K562 (cell line): ENCODE measurements at regions of chr14 and their contacts with region 1.

Region 1: DNA sequence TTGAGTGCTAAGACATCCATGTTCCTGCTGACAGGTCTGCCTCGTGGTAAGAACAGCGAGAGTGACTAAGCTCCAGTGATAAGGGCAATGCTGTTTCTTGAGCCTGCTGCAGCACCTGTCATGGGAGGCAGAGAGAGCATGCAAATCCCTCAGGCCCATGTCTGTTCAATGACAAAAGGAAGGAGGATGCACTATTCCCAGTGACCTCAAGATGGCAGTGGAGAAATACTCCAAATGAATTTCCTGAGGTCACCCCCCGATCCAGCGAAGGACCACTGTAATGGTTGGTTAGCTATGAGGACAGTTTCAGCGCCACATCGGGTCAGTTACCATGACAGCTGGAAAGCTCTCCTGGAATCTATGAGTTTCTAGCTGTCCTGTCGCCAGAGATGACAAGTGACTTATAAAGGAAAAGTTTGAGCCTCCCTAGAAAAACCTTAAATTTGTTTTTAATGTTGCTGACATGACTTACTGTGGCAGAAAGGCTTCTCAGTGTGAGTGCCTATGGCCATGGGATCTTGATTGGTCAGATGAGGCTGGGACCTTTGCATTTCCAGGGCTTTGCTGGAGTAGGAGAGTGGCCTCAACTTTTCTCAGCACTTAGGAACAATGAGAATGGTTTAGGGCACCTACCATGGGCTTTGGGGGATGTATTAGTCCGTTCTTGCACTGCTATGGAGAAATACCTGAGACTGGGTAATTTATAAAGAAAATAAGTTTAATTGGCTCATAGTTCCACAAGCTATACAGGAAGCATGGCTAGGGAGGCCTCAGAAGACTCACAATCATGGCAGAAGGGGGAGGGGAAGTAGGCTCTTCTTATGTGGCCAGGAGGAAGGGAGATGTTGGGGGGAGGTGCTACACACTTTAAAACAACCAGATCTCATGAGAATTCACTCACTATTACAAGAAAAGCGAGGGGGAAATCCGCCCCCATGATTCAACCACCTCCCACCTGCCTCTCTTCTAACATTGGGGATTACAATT is 88.0 kb upstream of the TMEM260 start:
- DNase-seq: peak; percentile 12 to 41 (median 27)
- ATAC-seq: peak; percentile 73
- H3K4me3 ChIP-seq: no peak overlapping the region
- H3K27ac ChIP-seq: no peak overlapping the region
- H3K4me1 ChIP-seq: no peaks in the 10 kb centered on the region
- H3K27me3 ChIP-seq: no peaks in the 10 kb centered on the region; a peak in 1 of 5 replicates
- CTCF ChIP-seq: peak; percentile 47 to 60 (median 59); a peak in 5 of 6 replicates
- EP300 ChIP-seq: no peak
- POLR2A ChIP-seq: no peak
- RAD21 ChIP-seq: peak; percentile 37 to 63

Region 2: DNA sequence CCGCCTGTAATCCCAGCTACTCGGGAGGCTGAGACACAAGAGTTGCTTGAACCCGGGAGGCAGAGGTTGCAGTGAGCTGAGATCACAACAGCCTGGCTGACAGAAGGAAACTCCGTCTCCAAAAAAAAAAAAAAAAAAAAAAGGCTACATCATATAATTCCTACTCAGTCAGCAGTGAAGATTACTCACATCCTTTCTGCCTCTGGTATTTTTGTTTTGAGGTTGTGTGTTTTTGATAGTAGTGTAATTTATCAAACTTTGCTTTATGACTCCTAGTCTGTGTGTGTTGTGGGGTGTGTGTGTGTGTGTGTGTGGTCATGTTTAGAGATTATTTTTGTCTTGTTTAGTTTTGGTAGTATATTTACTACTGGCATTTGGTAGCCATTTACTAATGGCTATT is 1270.4 kb before region 1 on chr14:
- CTCF ChIA-PET with region 1: no interaction called
- POLR2A ChIA-PET with region 1: no interaction called
- in situ Hi-C with region 1: loop called (anchors 25 kb)
- intact Hi-C with region 1: no loop called
- DNase-seq: no peak
- ATAC-seq: no peak
- H3K4me3 ChIP-seq: no peak overlapping the region
- H3K27ac ChIP-seq: no peak overlapping the region
- H3K4me1 ChIP-seq: no peaks in the 10 kb centered on the region; a peak in 1 of 5 replicates
- H3K27me3 ChIP-seq: no peaks in the 10 kb centered on the region
- CTCF ChIP-seq: no peak
- EP300 ChIP-seq: no peak
- POLR2A ChIP-seq: no peak
- RAD21 ChIP-seq: no peak

Region 3: GRCh38 chr14:57182760-57183503 is 691.3 kb after region 1 on chr14:
- CTCF ChIA-PET with region 1: interaction called, 5 read pairs
- POLR2A ChIA-PET with region 1: no interaction called
- in situ Hi-C with region 1: loop called (anchors 25 kb)
- intact Hi-C with region 1: loop called (anchors 5 kb)
- DNase-seq: peak in 3 of 4 experiments; percentile 4 to 28 (median 9)
- ATAC-seq: peak; percentile 76
- H3K4me3 ChIP-seq: no peak overlapping the region
- H3K27ac ChIP-seq: no peak overlapping the region
- H3K4me1 ChIP-seq: no peaks in the 10 kb centered on the region
- H3K27me3 ChIP-seq: peaks cover 0 to 9% of the 10 kb centered on the region in 2 experiments; a peak in 3 of 5 replicates
- CTCF ChIP-seq: peak; percentile 46 to 59 (median 57); a peak in 5 of 6 replicates
- EP300 ChIP-seq: no peak
- POLR2A ChIP-seq: no peak
- RAD21 ChIP-seq: peak; percentile 64 to 69

Region 4: GRCh38 chr14:57293866-57294837 is 802.6 kb after region 1 on chr14:
- CTCF ChIA-PET with region 1: interaction called, 7 read pairs
- POLR2A ChIA-PET with region 1: no interaction called
- in situ Hi-C with region 1: no loop called
- intact Hi-C with region 1: loop called (anchors 10 kb)
- DNase-seq: no peak
- ATAC-seq: no peak
- H3K4me3 ChIP-seq: no peak overlapping the region
- H3K27ac ChIP-seq: no peak overlapping the region
- H3K4me1 ChIP-seq: no peaks in the 10 kb centered on the region
- H3K27me3 ChIP-seq: no peaks in the 10 kb centered on the region
- CTCF ChIP-seq: peak in 2 of 3 experiments; percentile 12 to 41; a peak in 1 of 6 replicates
- EP300 ChIP-seq: no peak
- POLR2A ChIP-seq: no peak
- RAD21 ChIP-seq: peak in 1 of 2 experiments; percentile 15; a peak in 1 of 4 replicates

Region 5: DNA sequence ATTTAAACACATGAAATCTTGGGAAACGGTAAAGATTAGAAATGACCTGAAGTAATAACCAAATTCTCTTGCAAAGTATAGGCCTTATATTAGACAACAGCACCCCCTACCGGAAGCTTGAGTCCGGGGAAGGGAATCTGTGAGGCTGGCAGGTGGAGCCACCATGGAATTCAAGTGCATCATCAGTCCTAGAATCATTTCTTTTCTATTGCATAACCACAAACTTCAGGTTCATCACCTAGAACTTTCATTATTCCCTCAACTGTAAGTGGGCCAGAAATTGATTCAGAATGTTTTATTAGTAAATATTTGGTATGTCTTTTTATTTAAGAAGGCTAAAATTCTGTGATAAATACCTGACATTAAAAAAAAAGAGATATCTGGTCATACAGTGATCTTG is 825.7 kb after region 1 on chr14:
- CTCF ChIA-PET with region 1: interaction called, 8 read pairs
- POLR2A ChIA-PET with region 1: no interaction called
- in situ Hi-C with region 1: loop called (anchors 5 kb)
- intact Hi-C with region 1: loop called (anchors 5 kb)
- DNase-seq: peak; percentile 54 to 80 (median 55)
- ATAC-seq: peak; percentile 78
- H3K4me3 ChIP-seq: no peak overlapping the region
- H3K27ac ChIP-seq: no peak overlapping the region
- H3K4me1 ChIP-seq: no peaks in the 10 kb centered on the region
- H3K27me3 ChIP-seq: no peaks in the 10 kb centered on the region; a peak in 1 of 5 replicates
- CTCF ChIP-seq: peak; percentile 67 to 79 (median 69)
- EP300 ChIP-seq: no peak
- POLR2A ChIP-seq: no peak
- RAD21 ChIP-seq: peak; percentile 60 to 77

Region 6: DNA sequence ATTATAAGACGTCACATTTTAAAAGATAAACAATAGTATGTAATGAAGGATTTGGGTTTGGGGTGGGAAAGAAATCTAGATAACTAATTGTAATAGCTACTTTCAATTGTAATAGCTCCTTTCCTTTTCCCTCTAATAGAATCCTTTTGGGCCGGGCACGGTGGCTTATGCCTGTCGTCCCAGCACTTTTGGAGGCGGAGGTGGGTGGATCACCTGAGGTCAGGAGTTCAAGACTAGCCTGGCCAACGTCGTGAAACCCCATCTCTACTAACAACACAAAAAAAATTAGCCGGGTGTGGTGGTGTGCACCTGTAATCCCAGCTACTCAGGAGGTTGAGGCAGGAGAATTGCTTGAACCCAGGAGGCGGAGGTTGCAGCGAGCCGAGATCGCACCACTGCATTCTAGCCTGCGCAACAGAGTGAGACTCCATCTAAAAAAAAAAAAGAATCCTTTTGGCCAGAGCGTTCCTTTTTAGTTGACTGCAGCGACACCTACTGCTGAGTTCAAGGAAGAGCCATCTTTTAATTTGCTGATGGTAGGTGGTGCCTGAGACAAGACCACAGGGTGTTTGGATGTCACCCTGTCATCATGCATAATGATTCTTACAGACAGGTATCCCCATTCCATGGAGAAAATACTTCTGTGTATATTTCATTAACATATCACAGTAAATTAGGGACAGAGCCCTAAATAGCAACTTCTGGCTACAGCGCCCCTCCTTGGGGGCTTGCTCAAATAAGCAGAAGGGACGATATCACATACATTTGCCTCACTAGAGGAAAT is 1580.9 kb after region 1 on chr14:
- CTCF ChIA-PET with region 1: no interaction called
- POLR2A ChIA-PET with region 1: no interaction called
- in situ Hi-C with region 1: loop called (anchors 25 kb)
- intact Hi-C with region 1: no loop called
- DNase-seq: peak; percentile 45 to 69 (median 50)
- ATAC-seq: peak; percentile 91
- H3K4me3 ChIP-seq: no peak overlapping the region
- H3K27ac ChIP-seq: no peak overlapping the region
- H3K4me1 ChIP-seq: no peaks in the 10 kb centered on the region
- H3K27me3 ChIP-seq: no peaks in the 10 kb centered on the region; a peak in 1 of 5 replicates
- CTCF ChIP-seq: peak; percentile 63 to 75 (median 67)
- EP300 ChIP-seq: no peak
- POLR2A ChIP-seq: no peak
- RAD21 ChIP-seq: peak; percentile 33 to 60; a peak in 3 of 4 replicates